ENCODE measurements at regions of chr7 and their contacts with region 1.

Region 1: GRCh38 chr7:100545360-100546128 is 6.5 kb downstream of the AGFG2 start:
- DNase-seq: peak; percentile 82
- ATAC-seq: peak; percentile 78
- H3K4me3 Mint-ChIP-seq: peak overlapping the region; percentile 98
- H3K27ac Mint-ChIP-seq: peak overlapping the region; percentile 99
- H3K4me1 Mint-ChIP-seq: peaks cover 96% of the 10 kb centered on the region
- H3K27me3 Mint-ChIP-seq: no peaks in the 10 kb centered on the region

Region 2: GRCh38 chr7:100369105-100369504 is 176.4 kb before region 1 on chr7:
- CTCF ChIA-PET with region 1: no interaction called
- POLR2A ChIA-PET with region 1: no interaction called
- intact Hi-C with region 1: loop called in 1 of 2 experiments (anchors 1 kb)
- DNase-seq: no peak
- ATAC-seq: no peak
- H3K4me3 Mint-ChIP-seq: no peak overlapping the region
- H3K27ac Mint-ChIP-seq: no peak overlapping the region
- H3K4me1 Mint-ChIP-seq: peaks cover 40% of the 10 kb centered on the region
- H3K27me3 Mint-ChIP-seq: no peaks in the 10 kb centered on the region

Region 3: GRCh38 chr7:100532165-100533022 is 13.2 kb before region 1 on chr7:
- CTCF ChIA-PET with region 1: interaction called, 4 read pairs
- POLR2A ChIA-PET with region 1: interaction called, 3 read pairs
- intact Hi-C with region 1: loop called (anchors 1 to 2 kb)
- DNase-seq: no peak
- ATAC-seq: no peak
- H3K4me3 Mint-ChIP-seq: no peak overlapping the region
- H3K27ac Mint-ChIP-seq: no peak overlapping the region
- H3K4me1 Mint-ChIP-seq: peaks cover 8% of the 10 kb centered on the region
- H3K27me3 Mint-ChIP-seq: no peaks in the 10 kb centered on the region